ENCODE measurements at regions of chr2 and their contacts with region 1.

Region 1: DNA sequence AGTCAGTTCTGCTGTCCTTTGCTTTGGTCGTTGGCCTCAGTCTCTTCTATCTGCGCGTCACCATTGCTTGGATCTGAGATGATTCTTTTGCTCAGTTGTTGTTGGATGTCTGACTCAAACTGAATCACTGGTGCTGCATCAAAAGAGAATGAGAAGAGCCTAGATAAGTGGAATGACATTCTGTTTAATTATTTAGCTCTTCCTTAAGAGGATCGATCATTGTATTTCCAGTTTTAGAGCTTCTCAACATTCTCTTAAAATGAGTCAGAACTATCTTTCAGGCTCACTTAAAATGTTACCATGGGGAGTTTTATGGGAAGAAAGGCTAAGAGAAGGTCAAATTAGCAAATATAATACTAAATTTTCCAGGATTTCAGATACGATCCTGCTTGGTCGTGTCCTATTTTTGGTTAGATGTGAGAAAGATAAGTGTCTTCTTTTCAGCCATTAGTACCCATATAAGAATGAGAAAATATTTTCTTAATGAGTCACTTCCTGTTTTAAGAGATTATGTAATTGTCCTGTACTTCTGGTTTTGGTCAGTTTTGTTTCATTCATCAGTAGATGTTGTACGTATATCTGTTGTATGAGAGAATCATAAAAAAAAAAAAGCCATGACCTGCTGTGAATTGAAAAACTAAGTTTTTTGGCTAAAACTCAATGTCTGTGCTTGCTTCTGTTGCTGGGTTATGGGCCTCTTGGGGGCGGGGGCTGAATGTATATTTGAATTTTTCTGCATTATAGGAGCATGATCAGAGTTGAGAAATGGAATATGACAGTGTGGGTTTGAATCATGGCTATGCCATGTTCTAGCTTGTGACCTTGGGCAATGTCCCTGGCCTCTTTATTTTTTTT is 31.6 kb upstream of the CASP10 start:
- DNase-seq: no peak
- ATAC-seq: peak; percentile 28 to 52
- H3K4me3 ChIP-seq: no peak overlapping the region
- H3K27ac ChIP-seq: peak overlapping the region; percentile 93
- H3K4me1 ChIP-seq: peaks cover 13% of the 10 kb centered on the region
- H3K27me3 ChIP-seq: no peaks in the 10 kb centered on the region

Region 2: DNA sequence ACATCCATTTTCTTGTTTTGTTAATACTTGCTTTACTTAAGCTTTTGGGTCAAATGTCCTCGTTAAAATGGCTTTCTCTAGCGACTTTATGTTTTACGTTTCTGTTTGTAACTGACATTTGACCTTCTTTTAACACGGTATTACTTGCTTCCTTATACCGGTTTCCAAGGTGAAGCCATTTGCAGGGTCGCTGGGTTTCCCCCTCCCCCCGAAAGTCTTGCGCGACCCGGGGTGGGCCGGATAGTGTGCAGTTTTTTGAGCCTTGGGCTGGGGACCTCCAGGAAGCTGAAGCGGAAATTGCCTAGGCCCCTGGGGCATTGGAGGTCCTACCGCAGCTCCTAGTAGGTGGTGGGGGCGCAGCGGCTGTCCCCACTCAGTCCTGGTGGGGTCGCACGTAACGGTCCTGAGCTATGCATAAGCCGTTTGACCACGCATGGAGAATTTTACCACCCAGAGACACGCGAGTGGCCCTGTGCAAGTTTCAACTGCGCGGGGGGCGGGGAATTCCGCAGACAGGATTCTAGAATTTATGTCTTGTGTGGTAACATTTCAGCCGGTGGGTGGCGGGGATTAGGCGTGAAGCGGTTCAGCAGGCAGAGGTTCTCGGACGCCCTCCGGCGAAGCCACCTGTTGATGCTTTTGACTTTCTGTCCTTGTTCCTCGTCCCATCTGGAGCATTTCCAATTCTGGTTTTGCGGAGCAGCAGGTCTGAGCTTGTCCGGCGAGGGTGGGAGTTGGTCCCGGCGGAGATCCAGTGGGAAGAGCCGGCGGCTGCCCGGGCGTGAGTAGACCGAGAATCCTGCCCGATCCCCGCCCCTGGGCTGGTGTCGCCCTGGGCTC is 33.0 kb before region 1 on chr2:
- intact Hi-C with region 1: loop called in 3 of 4 experiments (anchors 5 kb)
- DNase-seq: peak; percentile 89 to 95 (median 93)
- ATAC-seq: peak; percentile 48 to 50
- H3K4me3 ChIP-seq: peak overlapping the region; percentile 77
- H3K27ac ChIP-seq: peak overlapping the region; percentile 97
- H3K4me1 ChIP-seq: peaks cover 7% of the 10 kb centered on the region
- H3K27me3 ChIP-seq: no peaks in the 10 kb centered on the region